Left ventricle myocardium superior (tissue), 1 donor: ENCODE measurements at regions of chr5 and their contacts with region 1.

Region 1: GRCh38 chr5:141968914-141969608 is at the start of gene RNF14:
- DNase-seq: peak; percentile 97
- ATAC-seq: peak; percentile 98
- total RNA-seq, gene RNF14: 99.8 TPM

Region 2: GRCh38 chr5:141878711-141879425 is 90.2 kb before region 1 on chr5:
- intact Hi-C with region 1: loop called (anchors 10 kb)
- DNase-seq: peak; percentile 84
- ATAC-seq: peak; percentile 86